ENCODE measurements at regions of chr19 and their contacts with region 1.

Region 1: DNA sequence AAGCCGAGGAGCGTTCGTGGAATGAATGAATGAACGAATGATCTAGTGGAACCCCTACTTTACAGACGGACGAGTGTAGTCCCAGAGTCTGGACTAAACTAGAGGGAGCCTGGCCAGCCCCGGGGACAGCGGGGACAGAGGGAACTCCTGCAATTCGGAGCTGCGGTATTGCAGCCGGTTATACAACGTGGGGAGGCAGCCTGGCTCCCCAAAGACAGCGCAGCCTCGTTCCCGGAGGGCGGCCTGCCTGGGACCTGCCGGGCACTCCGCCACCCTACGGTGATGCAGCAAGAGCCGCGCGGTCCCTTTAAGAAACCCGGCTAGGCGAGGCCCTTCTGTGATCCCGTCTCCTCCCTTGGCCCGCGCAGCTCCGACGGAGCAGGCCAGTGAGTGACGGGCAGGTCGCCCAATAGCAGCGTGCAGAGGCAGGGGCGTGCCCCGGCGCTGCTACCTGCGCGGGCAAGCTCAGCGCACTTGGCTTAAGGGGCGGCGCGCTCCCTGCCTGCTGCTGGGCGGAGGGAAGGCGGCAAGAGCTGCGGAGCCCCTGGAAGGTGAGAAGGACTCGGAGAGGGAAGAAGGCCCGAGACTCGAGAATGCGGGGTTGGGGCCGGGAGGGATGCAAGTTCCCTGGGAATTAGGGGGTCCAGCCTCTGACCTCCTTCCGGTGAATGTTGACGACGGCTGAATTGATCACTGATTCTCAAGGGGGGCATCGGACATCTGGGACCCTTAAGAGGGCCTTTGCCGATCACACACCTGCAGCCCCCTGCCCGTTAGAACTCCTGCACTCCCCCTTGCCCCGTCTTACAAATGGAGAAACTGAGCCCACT is at the start of gene ABCA7:
- DNase-seq: peak; percentile 99
- H3K4me3 ChIP-seq: peak within 1 kb of the TSS; percentile 61 to 69 (median 65)
- H3K27ac ChIP-seq: peak within 1 kb of the TSS; percentile 36
- H3K4me1 ChIP-seq: peaks cover 28% of the 10 kb centered on the region
- H3K27me3 ChIP-seq: no peaks in the 10 kb centered on the region
- CTCF ChIP-seq: peak in 1 of 2 donors; percentile 8
- total RNA-seq, gene ABCA7: 14.3 to 28.4 TPM

Region 2: GRCh38 chr19:984165-984967 is 55.5 kb before region 1 on chr19 and contains the start of gene WDR18:
- CTCF ChIA-PET with region 1: no interaction called
- dilution Hi-C with region 1: no loop called
- in situ Hi-C with region 1: no loop called
- intact Hi-C with region 1: no loop called
- DNase-seq: peak; percentile 83
- H3K4me3 ChIP-seq: peak within 1 kb of the TSS; percentile 79 to 99 (median 99)
- H3K27ac ChIP-seq: peak within 1 kb of the TSS; percentile 81
- H3K4me1 ChIP-seq: peaks cover 15% of the 10 kb centered on the region
- H3K27me3 ChIP-seq: no peaks in the 10 kb centered on the region
- CTCF ChIP-seq: peak in 1 of 2 donors; percentile 21
- total RNA-seq, gene WDR18: 42.0 to 84.1 TPM

Region 3: DNA sequence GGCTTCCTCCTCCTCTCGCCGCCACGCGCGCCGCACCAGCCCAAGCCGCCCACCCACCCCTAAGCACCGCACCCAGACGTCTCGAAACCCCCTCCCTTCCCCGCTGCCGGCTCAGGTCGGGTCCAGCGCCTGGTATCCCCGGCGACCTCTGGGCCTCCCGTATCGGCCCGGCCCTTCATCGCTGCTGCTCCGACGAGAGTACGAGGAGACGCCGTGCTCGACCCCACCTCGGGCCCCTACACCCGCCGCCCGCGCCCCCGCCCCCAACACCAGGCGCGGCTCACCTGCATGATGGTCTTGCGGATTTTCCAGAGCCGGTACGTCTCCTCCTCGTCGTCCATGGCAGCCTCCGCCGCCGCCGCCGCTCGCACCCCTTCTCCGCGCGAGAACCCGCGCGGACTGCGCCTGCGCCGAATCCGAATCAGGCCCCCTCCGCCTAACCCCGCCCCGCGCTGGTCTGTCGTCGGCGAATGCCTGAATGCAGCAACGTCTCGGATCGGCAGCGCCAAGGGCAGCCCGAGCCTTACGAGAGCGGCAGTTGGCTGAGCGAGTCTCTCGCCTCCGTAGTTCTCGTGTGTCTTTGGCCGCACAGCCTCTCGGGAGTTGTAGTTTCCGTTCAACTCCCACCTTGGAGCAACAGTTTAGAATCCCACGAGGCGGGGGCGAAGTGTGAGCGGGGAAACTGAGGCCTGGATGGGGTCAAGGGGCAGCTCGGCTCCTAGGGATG is 55.3 kb after region 1 on chr19 and contains the start of gene POLR2E:
- CTCF ChIA-PET with region 1: no interaction called
- dilution Hi-C with region 1: no loop called
- in situ Hi-C with region 1: no loop called
- intact Hi-C with region 1: loop called (anchors 2 kb)
- DNase-seq: peak; percentile 95
- H3K4me3 ChIP-seq: peak within 1 kb of the TSS; percentile 98 to 100 (median 100)
- H3K27ac ChIP-seq: peak within 1 kb of the TSS; percentile 74
- H3K4me1 ChIP-seq: peaks cover 22% of the 10 kb centered on the region
- H3K27me3 ChIP-seq: no peaks in the 10 kb centered on the region
- CTCF ChIP-seq: no peak
- total RNA-seq, gene POLR2E: 63.7 to 233 TPM